Head of caudate nucleus (tissue), 42 donors: ENCODE measurements at regions of chr16 and their contacts with region 1.

Region 1: DNA sequence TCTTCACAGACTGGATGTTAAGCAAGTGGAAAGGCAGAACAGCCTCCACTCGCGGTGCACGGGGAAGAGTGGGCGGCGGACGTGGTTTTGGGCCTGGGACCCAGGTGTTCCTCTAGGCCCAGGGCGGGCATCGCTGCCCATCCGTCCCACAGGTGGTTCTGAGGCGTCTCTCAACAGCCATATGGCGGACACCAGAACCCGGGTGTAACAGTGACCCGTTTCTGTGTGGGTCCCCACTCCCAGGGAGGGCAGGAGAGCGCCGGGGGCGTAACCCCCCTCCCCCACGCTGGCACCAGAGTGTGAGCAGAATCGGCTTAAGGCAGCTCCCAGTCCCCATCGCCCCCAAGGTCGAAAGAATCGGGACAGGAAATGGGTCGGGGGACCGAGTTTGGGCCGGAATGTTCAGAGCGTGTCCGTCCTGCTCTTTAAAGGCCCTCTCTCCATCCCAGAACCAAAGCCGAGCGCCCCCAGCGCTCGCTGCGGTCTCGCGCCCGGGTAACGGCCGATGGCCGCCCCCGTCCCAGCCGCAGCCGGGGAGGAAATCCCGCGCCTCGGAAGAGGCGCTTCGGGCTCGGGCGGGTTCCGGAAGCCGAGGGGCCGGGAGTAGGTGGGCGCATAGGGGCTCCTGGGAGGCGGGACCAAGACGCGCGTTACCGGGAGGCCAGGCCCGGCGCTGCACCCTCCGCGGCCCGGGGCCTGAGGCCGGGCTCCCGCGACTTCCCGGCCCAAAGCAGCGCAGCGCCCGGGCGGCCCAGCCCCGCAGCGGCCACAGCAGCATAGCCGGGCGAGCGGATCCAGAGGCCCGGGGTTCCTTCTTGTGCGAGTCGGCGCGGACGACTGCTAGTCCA is at the start of gene TK2:
- DNase-seq: peak; percentile 27 to 84 (median 65)

Region 2: GRCh38 chr16:66516808-66517585 is 32.5 kb before region 1 on chr16:
- intact Hi-C with region 1: loop called (anchors 2 kb)
- DNase-seq: peak; percentile 81 to 98 (median 92)